ENCODE measurements at regions of chr14 and their contacts with region 1.

Region 1: GRCh38 chr14:94080471-94081289 is at the start of gene DDX24:
- DNase-seq: peak; percentile 98
- ATAC-seq: peak; percentile 98
- H3K4me3 Mint-ChIP-seq: peak within 1 kb of the TSS; percentile 98
- H3K27ac Mint-ChIP-seq: peak within 1 kb of the TSS; percentile 99
- H3K4me1 Mint-ChIP-seq: peaks cover 44% of the 10 kb centered on the region
- H3K27me3 Mint-ChIP-seq: no peaks in the 10 kb centered on the region
- CTCF ChIP-seq: no peak
- total RNA-seq, gene DDX24: 272 to 275 TPM

Region 2: GRCh38 chr14:93929048-93929606 is 151.6 kb before region 1 on chr14:
- CTCF ChIA-PET with region 1: no interaction called
- POLR2A ChIA-PET with region 1: no interaction called
- intact Hi-C with region 1: no loop called
- DNase-seq: no peak
- ATAC-seq: no peak
- H3K4me3 Mint-ChIP-seq: no peak overlapping the region
- H3K27ac Mint-ChIP-seq: no peak overlapping the region
- H3K4me1 Mint-ChIP-seq: no peaks in the 10 kb centered on the region
- H3K27me3 Mint-ChIP-seq: no peaks in the 10 kb centered on the region
- CTCF ChIP-seq: no peak

Region 3: DNA sequence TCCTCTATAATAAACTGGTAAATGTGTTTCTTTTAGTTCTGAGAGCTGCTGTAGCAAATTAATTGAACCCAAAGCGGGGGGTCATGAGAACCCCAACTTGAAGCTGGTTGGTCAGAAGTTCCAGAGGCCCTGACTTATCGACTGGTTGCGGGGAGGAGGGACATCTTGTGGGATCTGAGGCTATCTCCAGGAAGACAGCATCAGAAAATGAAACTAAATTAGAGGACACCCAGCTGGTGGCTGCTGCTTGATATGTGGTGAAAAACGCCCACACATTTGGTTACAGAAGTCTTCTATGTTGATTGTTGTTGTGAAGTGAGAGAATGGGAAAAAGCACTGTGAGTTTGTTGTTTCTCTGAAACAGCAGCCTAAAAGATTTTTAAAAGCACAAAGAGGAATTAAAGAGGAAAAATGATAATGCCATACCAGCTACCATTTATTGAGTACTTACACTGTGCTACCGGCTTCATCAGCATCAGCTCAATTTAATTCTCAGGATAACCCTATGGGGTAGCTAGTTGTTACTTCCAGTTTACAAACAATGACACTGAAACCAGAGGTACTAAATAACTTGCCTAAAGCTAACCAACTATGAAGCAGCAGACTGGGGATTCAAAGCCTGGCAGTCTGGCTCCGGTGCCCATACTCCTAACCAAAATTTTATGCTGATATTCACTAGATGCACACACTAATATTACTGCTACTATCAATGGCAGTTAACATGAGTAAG is 23.9 kb before region 1 on chr14:
- CTCF ChIA-PET with region 1: interaction called, 6 read pairs
- POLR2A ChIA-PET with region 1: interaction called, 34 read pairs
- intact Hi-C with region 1: loop called (anchors 2 kb)
- DNase-seq: peak; percentile 74
- ATAC-seq: peak; percentile 80
- H3K4me3 Mint-ChIP-seq: no peak overlapping the region
- H3K27ac Mint-ChIP-seq: peak overlapping the region; percentile 80
- H3K4me1 Mint-ChIP-seq: peaks cover 54% of the 10 kb centered on the region
- H3K27me3 Mint-ChIP-seq: no peaks in the 10 kb centered on the region
- CTCF ChIP-seq: no peak

Region 4: GRCh38 chr14:94066089-94066676 is 14.5 kb before region 1 on chr14:
- CTCF ChIA-PET with region 1: interaction called, 17 read pairs
- POLR2A ChIA-PET with region 1: interaction called, 34 read pairs
- intact Hi-C with region 1: no loop called
- DNase-seq: no peak
- ATAC-seq: no peak
- H3K4me3 Mint-ChIP-seq: no peak overlapping the region
- H3K27ac Mint-ChIP-seq: peak overlapping the region; percentile 67
- H3K4me1 Mint-ChIP-seq: peaks cover 77% of the 10 kb centered on the region
- H3K27me3 Mint-ChIP-seq: no peaks in the 10 kb centered on the region
- CTCF ChIP-seq: no peak

Region 5: GRCh38 chr14:94098326-94098992 is 17.8 kb after region 1 on chr14:
- CTCF ChIA-PET with region 1: no interaction called
- POLR2A ChIA-PET with region 1: no interaction called
- intact Hi-C with region 1: no loop called
- DNase-seq: no peak
- ATAC-seq: no peak
- H3K4me3 Mint-ChIP-seq: no peak overlapping the region
- H3K27ac Mint-ChIP-seq: no peak overlapping the region
- H3K4me1 Mint-ChIP-seq: no peaks in the 10 kb centered on the region
- H3K27me3 Mint-ChIP-seq: no peaks in the 10 kb centered on the region
- CTCF ChIP-seq: no peak

Region 6: DNA sequence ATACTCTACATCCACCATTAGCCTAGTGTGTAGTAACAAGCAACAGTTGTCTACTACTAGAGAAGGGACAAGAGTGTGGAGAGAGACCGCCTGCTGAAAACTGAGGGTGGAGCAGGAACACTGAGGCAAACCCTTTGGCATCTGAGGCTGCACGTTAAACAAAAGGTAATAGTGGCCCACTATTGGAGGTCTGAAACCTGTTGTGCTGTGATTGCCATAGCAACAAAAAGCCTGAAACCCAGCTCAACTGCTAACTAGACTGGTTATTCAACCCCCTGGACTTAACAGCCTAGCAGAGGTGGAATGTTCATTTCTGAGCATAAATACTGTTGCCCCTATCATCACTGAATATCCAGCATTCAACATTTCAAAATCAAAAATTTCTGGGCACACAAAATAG is 136.4 kb after region 1 on chr14:
- CTCF ChIA-PET with region 1: no interaction called
- POLR2A ChIA-PET with region 1: no interaction called
- intact Hi-C with region 1: no loop called
- DNase-seq: no peak
- ATAC-seq: no peak
- H3K4me3 Mint-ChIP-seq: no peak overlapping the region
- H3K27ac Mint-ChIP-seq: no peak overlapping the region
- H3K4me1 Mint-ChIP-seq: no peaks in the 10 kb centered on the region
- H3K27me3 Mint-ChIP-seq: peaks cover 19% of the 10 kb centered on the region
- CTCF ChIP-seq: no peak

Measured in activated CD8-positive, alpha-beta T cell treated with anti-CD3 and anti-CD28 coated beads for 36 hours (primary cell).